Gastrocnemius medialis (tissue), 4 donors: ENCODE measurements at regions of chr6 and their contacts with region 1.

Region 1: DNA sequence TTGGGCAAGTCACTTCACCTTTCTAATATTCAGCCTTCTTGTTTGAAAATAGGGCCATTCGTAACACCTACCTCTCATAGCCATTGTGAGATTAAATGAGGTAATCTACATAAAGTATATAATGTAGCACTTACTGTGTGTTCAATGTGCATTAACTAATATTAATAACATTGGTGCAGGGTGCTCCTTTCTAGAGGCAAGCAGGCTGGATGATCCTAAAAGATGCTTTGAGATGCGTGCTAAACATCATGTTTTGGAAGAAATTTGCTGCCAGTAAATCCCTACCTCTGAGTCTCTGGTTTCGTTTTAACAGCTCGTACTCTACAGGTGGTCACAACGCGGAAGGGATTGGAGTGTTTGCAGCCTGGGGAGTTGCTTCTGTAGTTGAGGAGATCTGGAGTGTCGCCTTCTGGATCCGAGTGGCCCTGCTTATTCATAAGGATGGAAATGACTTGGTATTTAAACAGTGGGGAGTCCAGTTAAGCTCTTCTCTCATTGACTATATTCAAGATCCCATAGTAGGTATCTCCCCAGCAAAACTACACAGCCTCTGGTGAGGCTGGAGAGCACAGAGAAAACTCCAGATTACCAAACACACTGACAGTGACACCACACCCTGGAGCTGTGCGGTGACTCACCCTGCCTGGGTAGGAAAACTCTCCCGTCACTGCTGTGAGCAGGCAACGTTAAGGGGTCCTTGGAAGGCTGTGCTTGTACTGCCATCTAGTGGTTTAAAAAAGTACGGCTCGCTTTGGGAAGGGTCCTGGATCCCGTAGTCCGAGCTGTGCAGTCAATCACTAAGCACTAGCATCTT is 107.9 kb downstream of the MAP3K7 start:
- DNase-seq: peak; percentile 92 to 95
- ATAC-seq: peak; percentile 99 to 100
- H3K4me3 ChIP-seq: no peak overlapping the region
- H3K27ac ChIP-seq: peak overlapping the region; percentile 31 to 68 (median 58)
- H3K4me1 ChIP-seq: peaks cover 0 to 5% of the 10 kb centered on the region in 2 donors
- H3K27me3 ChIP-seq: no peaks in the 10 kb centered on the region
- CTCF ChIP-seq: peak; percentile 86 to 94 (median 93)
- POLR2A ChIP-seq: no peak

Region 2: DNA sequence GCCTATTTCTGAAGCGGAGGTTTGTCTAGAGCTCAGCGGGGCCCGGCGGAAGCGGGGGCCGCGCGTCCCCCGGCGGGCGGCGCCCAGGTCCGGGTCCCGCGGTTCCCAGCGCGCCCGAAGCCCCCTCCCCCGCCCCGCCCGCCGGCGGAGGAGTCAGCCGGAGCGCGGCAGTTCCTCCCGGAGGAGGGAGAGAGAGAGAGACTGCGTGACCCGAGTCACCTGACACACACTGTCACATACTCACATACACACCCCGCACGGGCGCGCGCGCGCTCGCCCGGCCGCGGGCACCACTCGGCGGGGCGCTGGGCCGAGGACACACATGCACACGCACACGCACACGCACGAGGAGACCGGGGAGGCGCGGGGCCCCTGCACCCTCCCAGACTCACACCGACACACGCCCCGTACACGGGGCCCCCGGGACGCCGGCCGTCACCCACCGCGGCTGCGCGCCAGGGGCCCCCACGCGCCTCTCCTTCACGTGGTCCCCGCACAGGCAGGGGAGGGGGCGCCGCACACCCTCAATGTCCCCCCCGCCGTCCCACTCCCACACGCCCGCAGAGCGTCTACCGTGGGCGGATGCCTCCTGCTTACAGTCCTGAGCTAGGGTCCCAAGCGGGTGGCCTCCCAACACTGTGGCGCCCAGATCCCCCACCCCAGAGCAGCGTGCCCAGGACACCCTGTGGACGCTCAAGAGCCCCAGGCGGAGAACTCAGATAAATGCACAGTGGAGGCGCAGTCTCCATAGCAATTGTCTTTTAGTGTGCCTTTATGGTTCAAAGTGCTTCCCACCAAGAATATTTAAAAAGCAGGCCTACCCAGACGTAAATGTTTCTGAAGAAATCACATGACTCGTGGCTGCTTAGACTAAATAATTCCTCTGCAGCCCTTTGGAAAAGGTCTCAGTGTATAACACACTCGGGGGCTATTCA is 1066.7 kb before region 1 on chr6 and contains the start of gene RRAGD:
- in situ Hi-C with region 1: no loop called
- intact Hi-C with region 1: loop called (anchors 10 kb)
- DNase-seq: peak; percentile 82 to 91
- ATAC-seq: peak; percentile 85 to 91
- H3K4me3 ChIP-seq: peak within 1 kb of the TSS; percentile 89 to 97 (median 93)
- H3K27ac ChIP-seq: peak within 1 kb of the TSS; percentile 98 to 99 (median 99)
- H3K4me1 ChIP-seq: peaks cover 36 to 37% of the 10 kb centered on the region in 2 donors
- H3K27me3 ChIP-seq: no peaks in the 10 kb centered on the region
- CTCF ChIP-seq: peak in 3 of 5 experiments; percentile 20 to 47 (median 22)
- POLR2A ChIP-seq: peak; percentile 93 to 95
- total RNA-seq, gene RRAGD: 53.6 to 173 (median 106) TPM

Region 3: GRCh38 chr6:89940225-89941027 is 538.6 kb before region 1 on chr6:
- in situ Hi-C with region 1: loop called (anchors 5 to 10 kb)
- intact Hi-C with region 1: loop called (anchors 1 kb)
- DNase-seq: peak; percentile 70 to 80
- ATAC-seq: peak; percentile 94 to 95
- H3K4me3 ChIP-seq: no peak overlapping the region
- H3K27ac ChIP-seq: peak overlapping the region; percentile 18 to 60 (median 47)
- H3K4me1 ChIP-seq: peaks cover 25 to 27% of the 10 kb centered on the region in 2 donors
- H3K27me3 ChIP-seq: no peaks in the 10 kb centered on the region
- CTCF ChIP-seq: peak; percentile 63 to 74 (median 73)
- POLR2A ChIP-seq: no peak

Region 4: GRCh38 chr6:90216072-90216977 is 262.7 kb before region 1 on chr6:
- in situ Hi-C with region 1: no loop called
- intact Hi-C with region 1: loop called (anchors 10 kb)
- DNase-seq: peak in 1 of 2 donors; percentile 36
- ATAC-seq: no peak
- H3K4me3 ChIP-seq: no peak overlapping the region
- H3K27ac ChIP-seq: peak overlapping the region; percentile 86 to 96 (median 93)
- H3K4me1 ChIP-seq: peaks cover 46 to 73% of the 10 kb centered on the region in 2 donors
- H3K27me3 ChIP-seq: no peaks in the 10 kb centered on the region
- CTCF ChIP-seq: no peak
- POLR2A ChIP-seq: no peak

Region 5: DNA sequence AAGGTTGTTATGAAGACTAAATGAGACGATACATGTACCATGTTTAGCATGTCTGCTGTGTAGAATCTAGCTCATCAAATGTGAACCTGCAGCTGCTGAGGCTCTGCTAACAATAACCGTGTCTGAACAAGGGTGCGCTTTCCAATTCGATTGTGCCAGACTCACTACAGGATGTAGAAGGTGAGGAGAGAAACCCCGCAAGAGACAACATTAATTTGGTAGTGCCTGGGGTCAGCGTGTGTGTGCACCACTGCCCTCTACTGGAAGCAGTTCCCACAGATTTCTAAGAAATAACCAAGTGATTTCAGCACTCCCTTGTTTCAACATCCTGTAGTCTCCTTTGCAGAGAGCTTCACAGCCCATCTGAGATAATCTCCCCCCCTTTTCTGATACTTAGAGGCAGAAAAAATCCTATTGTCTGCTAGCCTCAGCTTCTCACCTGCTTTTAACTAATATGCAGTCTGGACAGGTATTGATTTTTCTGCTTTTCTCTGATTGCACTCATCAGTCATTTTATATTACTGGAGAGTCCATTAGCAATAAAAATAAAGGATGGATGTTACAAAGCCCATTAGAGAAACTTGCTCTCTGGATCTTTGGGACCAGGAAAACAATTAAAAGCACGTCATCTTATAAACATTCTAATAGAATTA is 85.6 kb before region 1 on chr6:
- in situ Hi-C with region 1: loop called in 2 of 4 experiments (anchors 5 kb)
- intact Hi-C with region 1: loop called (anchors 1 kb)
- DNase-seq: peak; percentile 28 to 42
- ATAC-seq: peak; percentile 75 to 95
- H3K4me3 ChIP-seq: no peak overlapping the region
- H3K27ac ChIP-seq: no peak overlapping the region
- H3K4me1 ChIP-seq: no peaks in the 10 kb centered on the region
- H3K27me3 ChIP-seq: no peaks in the 10 kb centered on the region
- CTCF ChIP-seq: peak; percentile 70 to 85 (median 79)
- POLR2A ChIP-seq: no peak

Region 6: GRCh38 chr6:90434094-90434493 is 44.9 kb before region 1 on chr6:
- in situ Hi-C with region 1: no loop called
- intact Hi-C with region 1: no loop called
- DNase-seq: no peak
- ATAC-seq: no peak
- H3K4me3 ChIP-seq: no peak overlapping the region
- H3K27ac ChIP-seq: no peak overlapping the region
- H3K4me1 ChIP-seq: no peaks in the 10 kb centered on the region
- H3K27me3 ChIP-seq: no peaks in the 10 kb centered on the region
- CTCF ChIP-seq: no peak
- POLR2A ChIP-seq: no peak